ENCODE measurements at regions of chr5 and their contacts with region 1.

Region 1: GRCh38 chr5:171927345-171927941 is 79.0 kb downstream of the FBXW11 start:
- DNase-seq: no peak
- H3K4me3 ChIP-seq: no peak overlapping the region
- H3K4me3 Mint-ChIP-seq: no peak overlapping the region
- H3K27ac ChIP-seq: no peak overlapping the region
- H3K27ac Mint-ChIP-seq: no peak overlapping the region
- H3K4me1 ChIP-seq: peaks cover 0 to 2% of the 10 kb centered on the region in 2 donors
- H3K4me1 Mint-ChIP-seq: peaks cover 7% of the 10 kb centered on the region
- H3K27me3 ChIP-seq: no peaks in the 10 kb centered on the region
- H3K27me3 Mint-ChIP-seq: peaks cover 0 to 1% (median 0%) of the 10 kb centered on the region in 3 donors
- CTCF ChIP-seq: peak; percentile 42

Region 2: DNA sequence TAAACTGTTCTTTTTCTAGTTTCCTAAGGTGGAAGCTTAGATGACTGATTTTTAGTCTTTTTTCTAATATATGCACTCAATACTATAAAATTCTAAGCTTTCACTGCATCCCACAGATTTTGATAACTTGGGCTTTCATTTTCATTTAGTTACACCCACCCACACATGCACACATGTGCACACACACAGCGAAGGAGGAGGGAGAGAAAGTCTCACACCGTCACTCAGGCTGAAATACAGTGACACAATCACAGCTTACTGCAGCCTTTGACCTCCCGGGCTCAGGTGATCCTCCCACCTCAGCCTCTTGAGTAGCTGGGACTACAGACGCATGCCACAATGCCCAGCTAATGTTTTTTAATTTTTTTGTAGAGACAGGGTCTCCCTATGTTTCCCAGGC is 45.3 kb before region 1 on chr5:
- intact Hi-C with region 1: no loop called
- DNase-seq: no peak
- H3K4me3 ChIP-seq: no peak overlapping the region
- H3K4me3 Mint-ChIP-seq: no peak overlapping the region
- H3K27ac ChIP-seq: no peak overlapping the region
- H3K27ac Mint-ChIP-seq: no peak overlapping the region
- H3K4me1 ChIP-seq: no peaks in the 10 kb centered on the region
- H3K4me1 Mint-ChIP-seq: peaks cover 6% of the 10 kb centered on the region
- H3K27me3 ChIP-seq: no peaks in the 10 kb centered on the region
- H3K27me3 Mint-ChIP-seq: peaks cover 0 to 2% (median 0%) of the 10 kb centered on the region in 3 donors
- CTCF ChIP-seq: no peak

Region 3: DNA sequence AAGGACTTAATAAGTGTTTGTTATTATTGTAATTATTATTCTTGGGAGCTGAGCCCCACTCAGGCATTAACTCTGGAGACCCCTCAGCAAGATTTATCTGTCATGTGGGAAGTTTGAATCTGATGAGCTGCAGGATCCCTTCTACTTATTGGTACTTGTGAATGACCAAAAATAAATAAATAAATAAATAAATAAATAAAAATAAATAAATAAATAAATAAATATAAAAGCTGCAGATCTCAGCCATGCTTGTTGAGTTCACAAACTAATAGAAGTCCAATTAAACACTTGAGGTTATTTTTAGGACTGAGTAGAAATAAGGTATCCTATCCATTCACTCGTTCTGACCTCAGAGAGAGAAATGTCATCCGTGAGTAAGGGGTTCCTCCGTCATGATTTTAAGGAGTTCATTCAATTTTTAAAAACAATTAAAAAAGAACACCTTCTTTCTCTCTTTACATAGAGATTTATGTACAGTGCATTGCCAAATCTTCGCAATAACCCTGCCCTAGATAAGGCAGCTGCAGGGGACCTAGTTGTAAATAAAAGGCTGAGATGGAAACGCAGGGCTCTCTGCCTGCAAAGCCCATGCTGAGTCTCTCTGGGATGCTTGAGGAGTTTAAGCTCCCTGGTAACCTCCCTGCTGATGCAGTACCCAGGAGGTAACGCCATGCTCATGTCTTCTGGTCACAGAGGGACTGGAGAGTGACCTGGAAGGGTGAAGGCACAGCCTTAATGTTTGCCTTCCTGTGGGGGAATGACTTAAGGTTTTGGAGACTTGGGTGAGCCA is 267.7 kb after region 1 on chr5:
- intact Hi-C with region 1: loop called in 1 of 2 experiments (anchors 5 kb)
- DNase-seq: no peak
- H3K4me3 ChIP-seq: no peak overlapping the region
- H3K4me3 Mint-ChIP-seq: no peak overlapping the region
- H3K27ac ChIP-seq: no peak overlapping the region
- H3K27ac Mint-ChIP-seq: no peak overlapping the region
- H3K4me1 ChIP-seq: peaks cover 11 to 13% of the 10 kb centered on the region in 2 donors
- H3K4me1 Mint-ChIP-seq: peaks cover 13% of the 10 kb centered on the region
- H3K27me3 ChIP-seq: no peaks in the 10 kb centered on the region
- H3K27me3 Mint-ChIP-seq: peaks cover 1 to 9% (median 1%) of the 10 kb centered on the region in 3 donors
- CTCF ChIP-seq: no peak

Measured in CD14-positive monocyte (primary cell).